Motor neuron (in vitro differentiated cells): ENCODE measurements at regions of chr1 and their contacts with region 1.

Region 1: GRCh38 chr1:180631766-180632325 is at the start of gene XPR1:
- ATAC-seq: peak; percentile 93 to 98 (median 98)
- H3K4me3 ChIP-seq: peak within 1 kb of the TSS; percentile 64 to 89 (median 69)
- H3K27ac ChIP-seq: peak within 1 kb of the TSS; percentile 77 to 83
- H3K4me1 ChIP-seq: peaks cover 5 to 20% of the 10 kb centered on the region in 2 donors
- total RNA-seq, gene XPR1: 24.0 to 162 (median 139) TPM

Region 2: DNA sequence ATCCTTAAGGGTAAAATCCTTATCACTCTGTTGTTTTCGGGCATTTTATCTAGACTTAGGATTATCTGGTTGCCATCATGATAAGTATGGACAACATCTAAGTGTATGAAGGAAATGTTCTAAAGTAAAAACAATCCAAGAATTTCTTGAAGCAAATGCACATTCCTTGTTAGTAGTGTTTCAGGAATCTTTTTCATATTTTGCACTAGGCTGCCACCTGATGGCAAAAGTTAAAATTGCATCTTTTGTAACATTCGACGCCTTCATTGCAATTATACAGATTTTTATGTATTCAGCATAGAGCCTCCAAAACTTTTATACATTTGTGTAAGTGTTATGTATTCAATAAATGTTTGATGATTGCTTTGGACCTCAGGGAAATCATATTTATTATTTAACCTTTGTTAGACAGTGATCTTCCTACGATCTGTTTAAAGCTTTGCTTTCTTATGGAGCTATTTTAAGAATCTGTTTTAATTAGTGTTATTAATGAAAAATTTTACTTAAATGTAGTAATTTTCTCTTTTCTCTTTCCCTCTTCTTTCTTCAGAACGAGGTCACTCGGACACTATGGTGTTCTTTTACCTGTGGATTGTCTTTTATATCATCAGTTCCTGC is 231.4 kb after region 1 on chr1:
- in situ Hi-C with region 1: loop called in 1 of 9 experiments (anchors 25 kb)
- ATAC-seq: peak in 3 of 8 experiments; percentile 19 to 32 (median 26)
- H3K4me3 ChIP-seq: no peak overlapping the region
- H3K27ac ChIP-seq: no peak overlapping the region
- H3K4me1 ChIP-seq: peaks cover 0 to 4% of the 10 kb centered on the region in 2 donors

Region 3: DNA sequence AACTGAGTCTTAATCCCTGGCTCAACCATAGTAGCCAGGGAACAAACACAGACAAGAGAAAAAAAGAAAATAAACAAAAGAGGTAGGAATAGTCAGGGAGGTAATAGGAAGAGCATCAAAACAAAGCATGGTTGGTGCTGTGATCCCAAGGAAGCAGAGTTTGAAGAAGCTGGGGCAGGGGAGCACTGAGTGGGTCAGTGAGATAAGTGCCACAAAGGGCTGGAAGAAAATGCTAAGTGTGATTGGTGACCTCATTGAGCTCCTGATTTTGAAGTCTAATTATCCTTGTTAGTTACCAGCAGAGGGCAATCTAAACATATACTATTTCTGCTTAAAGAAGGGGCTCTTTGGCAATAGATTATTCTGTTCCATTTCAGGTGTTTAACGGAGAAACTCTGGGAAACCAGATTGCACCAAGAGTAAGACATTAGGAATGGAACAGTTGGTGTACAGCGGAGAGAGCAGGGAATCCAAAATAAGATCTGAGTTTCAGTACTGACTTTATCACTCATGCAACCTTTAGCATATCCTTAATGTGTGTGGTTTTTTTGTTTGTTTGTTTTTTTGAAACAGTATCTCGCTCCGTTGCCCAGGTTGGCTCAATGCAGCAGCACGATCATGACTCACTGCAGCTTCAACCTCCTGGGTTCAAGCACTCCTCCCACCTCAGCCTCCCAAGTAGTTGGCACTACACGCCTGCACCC is 250.1 kb after region 1 on chr1:
- in situ Hi-C with region 1: no loop called
- ATAC-seq: peak; percentile 76 to 91 (median 84)
- H3K4me3 ChIP-seq: no peak overlapping the region
- H3K27ac ChIP-seq: no peak overlapping the region
- H3K4me1 ChIP-seq: no peaks in the 10 kb centered on the region